T-cell (primary cell): ENCODE measurements at regions of chr12 and their contacts with region 1.

Region 1: GRCh38 chr12:64796208-64796845 is 28.1 kb upstream of the TBC1D30 start:
- DNase-seq: peak in 30 of 35 experiments; percentile 9 to 85 (median 50)
- ATAC-seq: peak; percentile 77 to 84 (median 80)
- H3K4me3 ChIP-seq: no peak overlapping the region
- H3K4me3 Mint-ChIP-seq: no peak overlapping the region
- H3K27ac ChIP-seq: no peak overlapping the region
- H3K27ac Mint-ChIP-seq: no peak overlapping the region
- H3K4me1 ChIP-seq: no peaks in the 10 kb centered on the region
- H3K4me1 Mint-ChIP-seq: no peaks in the 10 kb centered on the region
- H3K27me3 ChIP-seq: peaks cover 0 to 12% of the 10 kb centered on the region in 2 experiments
- H3K27me3 Mint-ChIP-seq: peaks cover 24% of the 10 kb centered on the region in 2 donors

Region 2: DNA sequence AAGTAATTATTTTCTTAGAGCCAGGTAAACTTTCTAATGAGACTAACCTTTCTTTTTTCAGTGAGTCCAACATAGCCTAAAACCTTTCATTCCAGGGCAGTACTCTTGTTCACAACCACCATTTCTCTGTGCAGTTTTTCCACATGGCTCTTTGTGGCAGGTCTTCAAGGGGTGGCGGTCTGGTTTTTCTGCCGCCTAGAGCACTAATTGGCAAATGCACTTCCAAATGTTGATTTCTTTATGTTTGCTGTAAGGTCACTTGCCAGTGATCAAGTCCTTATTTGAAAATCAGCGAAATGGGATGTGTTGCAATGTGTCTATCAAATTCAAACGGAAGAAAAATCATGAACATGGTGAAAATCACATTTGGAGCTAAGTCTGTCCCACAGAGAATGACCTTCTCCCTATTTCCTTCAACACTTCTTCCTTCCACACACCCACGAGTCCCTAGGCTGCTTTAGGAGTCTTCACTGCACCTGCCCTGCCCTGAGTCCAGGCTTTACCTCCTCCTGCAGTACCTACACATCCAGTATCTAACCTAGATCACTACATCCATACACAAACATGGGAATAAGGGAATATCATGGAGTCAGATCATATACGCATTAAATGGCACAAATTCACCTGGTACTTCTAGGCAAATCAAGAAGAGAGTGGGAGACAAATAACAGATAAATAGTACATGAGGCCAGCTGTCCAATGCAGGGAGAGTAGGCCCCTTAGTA is 949.9 kb before region 1 on chr12:
- CTCF ChIA-PET with region 1: interaction called in 1 of 2 experiments, 10 read pairs
- POLR2A ChIA-PET with region 1: no interaction called
- DNase-seq: no peak
- ATAC-seq: no peak
- H3K4me3 ChIP-seq: no peak overlapping the region
- H3K4me3 Mint-ChIP-seq: no peak overlapping the region
- H3K27ac ChIP-seq: no peak overlapping the region
- H3K27ac Mint-ChIP-seq: no peak overlapping the region
- H3K4me1 ChIP-seq: peaks cover 0 to 11% of the 10 kb centered on the region in 2 experiments
- H3K4me1 Mint-ChIP-seq: peaks cover 6 to 11% (median 10%) of the 10 kb centered on the region in 3 donors
- H3K27me3 ChIP-seq: peaks cover 2 to 14% of the 10 kb centered on the region in 2 experiments
- H3K27me3 Mint-ChIP-seq: peaks cover 25 to 26% of the 10 kb centered on the region in 2 donors

Region 3: GRCh38 chr12:64675795-64676194 is 120.5 kb before region 1 on chr12:
- CTCF ChIA-PET with region 1: no interaction called
- POLR2A ChIA-PET with region 1: no interaction called
- DNase-seq: peak in 1 of 35 experiments; percentile 52
- ATAC-seq: no peak
- H3K4me3 ChIP-seq: no peak overlapping the region
- H3K4me3 Mint-ChIP-seq: peak overlapping the region; percentile 43 to 90 (median 57)
- H3K27ac ChIP-seq: peak overlapping the region; percentile 91
- H3K27ac Mint-ChIP-seq: peak overlapping the region; percentile 98 to 99
- H3K4me1 ChIP-seq: peaks cover 90 to 97% of the 10 kb centered on the region in 2 experiments
- H3K4me1 Mint-ChIP-seq: peaks cover 89 to 95% (median 93%) of the 10 kb centered on the region in 3 donors
- H3K27me3 ChIP-seq: no peaks in the 10 kb centered on the region
- H3K27me3 Mint-ChIP-seq: no peaks in the 10 kb centered on the region

Region 4: DNA sequence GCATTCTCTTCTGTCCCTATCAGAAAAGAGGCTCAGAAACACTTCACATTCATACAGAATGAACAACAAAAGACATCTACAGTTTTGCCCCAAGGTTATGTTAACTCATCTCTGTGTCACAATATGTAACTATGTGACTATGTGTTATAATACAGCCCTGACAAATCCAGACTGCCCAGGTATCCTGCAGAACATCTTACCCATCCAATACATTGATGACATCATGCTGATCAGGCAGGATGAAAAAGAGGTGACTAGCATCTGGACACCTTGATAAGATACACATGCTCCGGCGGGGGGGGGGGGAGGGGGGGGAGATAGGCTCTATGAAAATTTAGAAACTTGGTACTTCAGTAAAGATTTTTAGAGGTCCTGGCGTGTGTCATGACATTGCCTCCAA is 28.8 kb before region 1 on chr12:
- CTCF ChIA-PET with region 1: interaction called in 1 of 2 experiments, 10 read pairs
- POLR2A ChIA-PET with region 1: no interaction called
- DNase-seq: no peak
- ATAC-seq: no peak
- H3K4me3 ChIP-seq: no peak overlapping the region
- H3K4me3 Mint-ChIP-seq: no peak overlapping the region
- H3K27ac ChIP-seq: no peak overlapping the region
- H3K27ac Mint-ChIP-seq: no peak overlapping the region
- H3K4me1 ChIP-seq: no peaks in the 10 kb centered on the region
- H3K4me1 Mint-ChIP-seq: no peaks in the 10 kb centered on the region
- H3K27me3 ChIP-seq: peaks cover 0 to 12% of the 10 kb centered on the region in 2 experiments
- H3K27me3 Mint-ChIP-seq: peaks cover 6 to 7% of the 10 kb centered on the region in 2 donors

Region 5: DNA sequence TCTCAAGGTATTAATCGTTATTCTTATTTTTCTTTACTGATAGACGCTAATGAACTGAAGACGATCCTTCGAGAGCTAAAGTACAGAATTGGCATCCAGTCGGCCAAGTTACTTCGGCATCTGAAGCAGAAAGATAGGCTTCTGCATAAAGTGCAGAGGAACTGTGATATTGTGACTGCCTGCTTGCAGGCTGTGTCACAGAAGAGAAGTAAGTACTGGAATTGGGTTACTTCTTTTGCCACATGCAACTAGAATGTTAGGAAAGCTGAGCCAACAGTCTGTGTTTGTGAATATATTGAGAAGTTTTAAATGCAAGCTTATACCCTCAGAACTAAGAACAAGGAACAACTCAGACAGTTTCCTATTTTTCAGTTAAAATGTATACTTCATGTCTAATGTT is 10.5 kb before region 1 on chr12:
- CTCF ChIA-PET with region 1: interaction called, 4 to 14 read pairs
- POLR2A ChIA-PET with region 1: no interaction called
- DNase-seq: no peak
- ATAC-seq: no peak
- H3K4me3 ChIP-seq: no peak overlapping the region
- H3K4me3 Mint-ChIP-seq: no peak overlapping the region
- H3K27ac ChIP-seq: no peak overlapping the region
- H3K27ac Mint-ChIP-seq: no peak overlapping the region
- H3K4me1 ChIP-seq: peaks cover 6 to 11% of the 10 kb centered on the region in 2 experiments
- H3K4me1 Mint-ChIP-seq: peaks cover 13 to 16% (median 13%) of the 10 kb centered on the region in 3 donors
- H3K27me3 ChIP-seq: peaks cover 8 to 21% of the 10 kb centered on the region in 2 experiments
- H3K27me3 Mint-ChIP-seq: peaks cover 34 to 41% of the 10 kb centered on the region in 2 donors

Region 6: DNA sequence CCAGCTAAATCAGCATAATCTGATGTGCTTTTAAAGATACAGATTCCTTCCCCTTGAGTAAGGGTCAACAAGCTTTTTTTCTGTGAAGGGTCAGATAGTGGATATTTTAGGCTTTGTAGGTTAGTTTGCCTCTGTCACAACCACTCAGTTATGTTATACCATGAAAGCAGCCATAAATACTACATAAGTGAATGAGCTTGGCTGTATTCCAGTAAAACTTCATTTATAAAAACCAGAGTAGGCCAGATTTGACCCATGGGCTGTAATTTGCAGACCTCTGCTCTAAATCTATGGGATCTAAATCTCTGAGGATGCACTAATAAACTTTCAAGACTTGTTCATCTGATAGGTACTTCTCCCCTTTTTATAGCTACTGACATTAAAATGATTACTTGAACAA is 420.8 kb after region 1 on chr12:
- CTCF ChIA-PET with region 1: interaction called in 1 of 2 experiments, 13 read pairs
- POLR2A ChIA-PET with region 1: no interaction called
- DNase-seq: no peak
- ATAC-seq: no peak
- H3K4me3 ChIP-seq: no peak overlapping the region
- H3K4me3 Mint-ChIP-seq: no peak overlapping the region
- H3K27ac ChIP-seq: no peak overlapping the region
- H3K27ac Mint-ChIP-seq: peak overlapping the region in 1 of 2 donors; percentile 40
- H3K4me1 ChIP-seq: no peaks in the 10 kb centered on the region
- H3K4me1 Mint-ChIP-seq: peaks cover 10 to 12% (median 12%) of the 10 kb centered on the region in 3 donors
- H3K27me3 ChIP-seq: no peaks in the 10 kb centered on the region
- H3K27me3 Mint-ChIP-seq: no peaks in the 10 kb centered on the region

Region 7: DNA sequence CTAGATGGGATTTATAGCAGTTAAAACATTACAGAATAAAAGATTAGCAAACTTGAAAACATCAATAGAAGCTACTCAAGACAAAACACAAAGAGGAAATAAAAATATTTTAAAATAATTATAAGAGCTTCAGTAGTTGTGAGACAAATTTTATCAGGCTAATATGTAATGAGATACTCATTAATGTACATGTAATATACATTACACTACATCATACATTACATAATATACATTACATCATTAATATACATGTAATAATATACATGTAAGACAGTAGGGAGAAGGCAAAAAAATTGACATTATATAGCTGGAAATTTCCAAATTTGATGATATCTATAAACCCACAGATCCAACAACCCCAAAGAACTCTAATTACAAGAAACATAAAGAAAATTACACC is 778.6 kb after region 1 on chr12:
- CTCF ChIA-PET with region 1: no interaction called
- POLR2A ChIA-PET with region 1: no interaction called
- DNase-seq: no peak
- ATAC-seq: no peak
- H3K4me3 ChIP-seq: no peak overlapping the region
- H3K4me3 Mint-ChIP-seq: no peak overlapping the region
- H3K27ac ChIP-seq: no peak overlapping the region
- H3K27ac Mint-ChIP-seq: no peak overlapping the region
- H3K4me1 ChIP-seq: no peaks in the 10 kb centered on the region
- H3K4me1 Mint-ChIP-seq: no peaks in the 10 kb centered on the region
- H3K27me3 ChIP-seq: no peaks in the 10 kb centered on the region
- H3K27me3 Mint-ChIP-seq: peaks cover 3 to 12% of the 10 kb centered on the region in 2 donors

Region 8: GRCh38 chr12:66217342-66217917 is 1421.1 kb after region 1 on chr12:
- CTCF ChIA-PET with region 1: interaction called in 1 of 2 experiments, 10 read pairs
- POLR2A ChIA-PET with region 1: no interaction called
- DNase-seq: no peak
- ATAC-seq: no peak
- H3K4me3 ChIP-seq: no peak overlapping the region
- H3K4me3 Mint-ChIP-seq: no peak overlapping the region
- H3K27ac ChIP-seq: no peak overlapping the region
- H3K27ac Mint-ChIP-seq: no peak overlapping the region
- H3K4me1 ChIP-seq: no peaks in the 10 kb centered on the region
- H3K4me1 Mint-ChIP-seq: peaks cover 0 to 4% (median 2%) of the 10 kb centered on the region in 3 donors
- H3K27me3 ChIP-seq: peaks cover 0 to 2% of the 10 kb centered on the region in 2 experiments
- H3K27me3 Mint-ChIP-seq: peaks cover 8 to 12% of the 10 kb centered on the region in 2 donors